PC-9 (cell line): ENCODE measurements at regions of chr5 and their contacts with region 1.

Region 1: GRCh38 chr5:51829691-51830090 is 446.4 kb downstream of the ISL1 start:
- DNase-seq: no peak
- H3K4me3 ChIP-seq: no peak overlapping the region
- H3K27ac ChIP-seq: peak overlapping the region; percentile 74
- H3K4me1 ChIP-seq: peaks cover 24% of the 10 kb centered on the region
- H3K27me3 ChIP-seq: no peaks in the 10 kb centered on the region
- CTCF ChIP-seq: no peak

Region 2: GRCh38 chr5:51389582-51390541 is 439.8 kb before region 1 on chr5:
- CTCF ChIA-PET with region 1: no interaction called
- POLR2A ChIA-PET with region 1: no interaction called
- intact Hi-C with region 1: loop called (anchors 10 kb)
- DNase-seq: no peak
- H3K4me3 ChIP-seq: no peak overlapping the region
- H3K27ac ChIP-seq: no peak overlapping the region
- H3K4me1 ChIP-seq: 0 out of 2 replicates have a peak, but pooled peaks cover 4% of the 10 kb centered on the region
- H3K27me3 ChIP-seq: no peaks in the 10 kb centered on the region
- CTCF ChIP-seq: no peak

Region 3: GRCh38 chr5:51651889-51652288 is 177.8 kb before region 1 on chr5:
- CTCF ChIA-PET with region 1: no interaction called
- POLR2A ChIA-PET with region 1: no interaction called
- intact Hi-C with region 1: loop called (anchors 10 kb)
- DNase-seq: peak in 1 of 2 experiments; percentile 35
- H3K4me3 ChIP-seq: no peak overlapping the region
- H3K27ac ChIP-seq: no peak overlapping the region
- H3K4me1 ChIP-seq: 0 out of 2 replicates have a peak, but pooled peaks cover 11% of the 10 kb centered on the region
- H3K27me3 ChIP-seq: no peaks in the 10 kb centered on the region
- CTCF ChIP-seq: no peak

Region 4: GRCh38 chr5:52007230-52007858 is 177.7 kb after region 1 on chr5:
- CTCF ChIA-PET with region 1: no interaction called
- POLR2A ChIA-PET with region 1: no interaction called
- intact Hi-C with region 1: no loop called
- DNase-seq: peak in 1 of 2 experiments; percentile 20
- H3K4me3 ChIP-seq: no peak overlapping the region
- H3K27ac ChIP-seq: no peak overlapping the region
- H3K4me1 ChIP-seq: no peaks in the 10 kb centered on the region
- H3K27me3 ChIP-seq: no peaks in the 10 kb centered on the region
- CTCF ChIP-seq: peak; percentile 76

Region 5: GRCh38 chr5:52771343-52772039 is 941.8 kb after region 1 on chr5:
- CTCF ChIA-PET with region 1: no interaction called
- POLR2A ChIA-PET with region 1: no interaction called
- intact Hi-C with region 1: no loop called
- DNase-seq: no peak
- H3K4me3 ChIP-seq: no peak overlapping the region
- H3K27ac ChIP-seq: no peak overlapping the region
- H3K4me1 ChIP-seq: no peaks in the 10 kb centered on the region
- H3K27me3 ChIP-seq: no peaks in the 10 kb centered on the region
- CTCF ChIP-seq: no peak